ENCODE measurements at regions of chr3 and their contacts with region 1.

Region 1: GRCh38 chr3:49217688-49218470 is 46.5 kb downstream of the KLHDC8B start:
- DNase-seq: no peak
- H3K4me3 Mint-ChIP-seq: no peak overlapping the region
- H3K27ac Mint-ChIP-seq: peak overlapping the region; percentile 67
- H3K4me1 Mint-ChIP-seq: no peaks in the 10 kb centered on the region
- H3K27me3 Mint-ChIP-seq: no peaks in the 10 kb centered on the region
- CTCF ChIP-seq: no peak

Region 2: GRCh38 chr3:49158108-49158709 is 59.7 kb before region 1 on chr3:
- CTCF ChIA-PET with region 1: no interaction called
- POLR2A ChIA-PET with region 1: no interaction called
- intact Hi-C with region 1: no loop called
- DNase-seq: peak; percentile 68
- H3K4me3 Mint-ChIP-seq: no peak overlapping the region
- H3K27ac Mint-ChIP-seq: no peak overlapping the region
- H3K4me1 Mint-ChIP-seq: no peaks in the 10 kb centered on the region
- H3K27me3 Mint-ChIP-seq: no peaks in the 10 kb centered on the region
- CTCF ChIP-seq: peak; percentile 53

Region 3: DNA sequence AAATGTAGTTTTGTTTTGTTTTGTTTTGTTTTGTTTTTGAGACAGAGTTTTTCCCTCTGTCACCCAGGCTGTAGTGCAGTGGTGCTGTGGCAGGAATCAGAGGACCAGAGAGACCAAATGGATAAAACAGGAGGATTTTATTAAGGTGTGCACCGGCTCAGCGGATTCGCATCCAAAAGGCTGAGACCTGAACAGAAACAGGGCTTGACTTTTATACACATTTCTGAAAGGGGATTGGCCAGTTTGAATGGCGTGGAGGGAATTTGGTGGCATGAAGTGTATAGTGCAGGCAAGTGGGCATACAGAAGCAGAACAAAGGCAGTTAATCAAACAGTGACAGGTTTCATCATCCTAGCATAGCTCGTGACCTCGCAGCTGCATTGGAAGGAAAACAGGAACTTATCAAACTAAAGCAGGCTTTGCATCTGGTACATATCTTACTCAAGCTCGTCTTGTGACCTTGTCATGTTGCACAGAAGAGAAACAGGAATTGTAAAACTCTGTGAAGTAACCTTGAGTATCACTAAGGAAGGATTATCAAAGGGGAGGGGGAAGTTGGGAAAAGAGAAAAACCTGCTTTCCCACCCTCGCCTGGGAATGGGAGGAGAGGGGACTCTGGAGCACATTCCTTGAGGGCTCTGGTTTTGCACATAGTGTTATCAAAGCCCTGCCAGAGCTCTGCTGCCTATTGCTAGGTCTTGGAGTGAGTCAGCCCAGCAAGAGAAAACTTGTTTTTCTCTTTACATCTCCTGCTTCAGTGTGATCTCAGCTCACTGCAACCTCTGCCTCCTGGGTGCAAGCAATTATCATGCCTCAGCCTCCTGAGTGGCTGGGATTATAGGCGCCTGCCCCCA is 20.6 kb after region 1 on chr3:
- CTCF ChIA-PET with region 1: interaction called, 7 read pairs
- POLR2A ChIA-PET with region 1: interaction called, 10 read pairs
- intact Hi-C with region 1: no loop called
- DNase-seq: peak; percentile 73
- H3K4me3 Mint-ChIP-seq: peak overlapping the region; percentile 3
- H3K27ac Mint-ChIP-seq: peak overlapping the region; percentile 68
- H3K4me1 Mint-ChIP-seq: peaks cover 6% of the 10 kb centered on the region
- H3K27me3 Mint-ChIP-seq: no peaks in the 10 kb centered on the region
- CTCF ChIP-seq: no peak